ENCODE measurements at regions of chr19 and their contacts with region 1.

Region 1: DNA sequence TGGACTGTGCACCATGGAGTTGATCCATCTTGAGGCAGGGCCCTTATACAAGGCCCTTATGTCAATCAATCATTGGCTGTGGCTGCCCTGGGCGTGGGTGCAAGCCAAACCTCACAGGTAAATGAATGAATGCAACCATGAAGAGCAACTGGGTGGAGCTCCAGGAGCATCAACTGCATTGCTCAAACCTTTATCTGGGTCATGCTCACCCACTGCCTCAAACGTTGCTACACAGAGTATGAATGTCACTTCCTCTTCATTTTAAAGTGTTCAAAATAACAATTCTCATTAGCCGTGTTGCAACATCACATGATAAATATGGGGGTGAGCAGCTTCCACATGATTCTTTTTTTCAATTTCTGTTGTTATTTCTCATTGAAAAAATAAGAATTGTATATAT is 6.4 kb upstream of the ZNF333 start:
- DNase-seq: no peak
- H3K4me3 ChIP-seq: no peak overlapping the region
- H3K27ac ChIP-seq: no peak overlapping the region
- H3K4me1 ChIP-seq: no peaks in the 10 kb centered on the region
- H3K27me3 ChIP-seq: no peaks in the 10 kb centered on the region
- CTCF ChIP-seq: no peak

Region 2: GRCh38 chr19:14582894-14583340 is 100.5 kb before region 1 on chr19 and contains the start of gene CLEC17A:
- intact Hi-C with region 1: loop called (anchors 5 kb)
- DNase-seq: no peak
- H3K4me3 ChIP-seq: no peak within 1 kb of the TSS
- H3K27ac ChIP-seq: no peak within 1 kb of the TSS
- H3K4me1 ChIP-seq: no peaks in the 10 kb centered on the region
- H3K27me3 ChIP-seq: no peaks in the 10 kb centered on the region
- CTCF ChIP-seq: no peak
- total RNA-seq, gene CLEC17A: 0.12 to 0.32 TPM